Dorsolateral prefrontal cortex (tissue), 120 donors: ENCODE measurements at regions of chr11 and their contacts with region 1.

Region 1: GRCh38 chr11:111422494-111423249 is 43.6 kb upstream of the POU2AF1 start:
- DNase-seq: peak in 7 of 10 donors; percentile 37 to 74 (median 57)
- H3K4me3 ChIP-seq: no peak overlapping the region
- H3K27ac ChIP-seq: no peak overlapping the region
- H3K27me3 ChIP-seq: no peaks in the 10 kb centered on the region
- CTCF ChIP-seq: peak; percentile 23 to 84 (median 69)

Region 2: DNA sequence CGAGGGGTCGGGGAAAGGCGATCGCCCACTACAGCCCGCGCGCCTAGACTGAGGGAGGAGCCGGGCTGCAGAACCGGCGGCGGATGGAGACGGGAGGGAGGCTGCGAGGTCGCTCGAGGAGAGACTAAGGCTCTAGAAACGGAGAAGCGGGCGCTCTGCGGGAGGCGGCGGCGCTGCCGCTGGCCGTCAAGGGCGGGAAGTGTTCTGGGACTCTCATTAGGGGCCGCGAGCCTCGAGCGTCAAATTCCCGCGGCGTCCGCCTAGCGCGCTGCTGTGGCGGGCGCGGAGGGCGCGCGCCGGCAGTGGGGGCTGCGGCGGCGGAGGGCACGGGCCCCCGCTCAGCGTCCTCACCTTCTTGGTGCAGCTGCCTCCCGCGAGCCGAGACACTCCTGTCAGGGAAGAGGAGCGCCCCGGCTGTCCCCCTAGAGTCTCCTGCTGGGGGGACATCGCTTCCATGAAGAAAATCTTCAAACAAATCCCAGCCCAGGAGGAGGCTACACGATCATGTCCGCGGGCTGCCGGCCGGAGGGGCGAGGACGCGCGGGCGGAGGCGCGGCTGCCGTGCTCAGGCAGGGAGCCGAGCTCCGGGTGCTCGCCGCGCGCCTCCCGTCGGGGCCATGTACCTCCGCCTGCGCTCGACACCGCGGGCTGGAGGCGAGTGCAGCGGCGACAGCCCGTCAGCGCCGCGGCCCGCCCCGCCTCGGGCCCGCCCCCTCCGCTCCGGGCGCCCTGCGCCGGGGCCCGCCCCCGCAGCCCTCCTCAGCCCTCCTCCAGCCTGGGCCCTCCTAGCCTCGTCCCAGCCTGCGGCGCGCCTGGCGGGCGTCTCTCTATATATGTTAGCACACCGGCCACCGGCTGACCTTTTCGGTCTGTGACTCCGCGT is 710.7 kb before region 1 on chr11 and contains the start of gene ARHGAP20:
- intact Hi-C with region 1: loop called in 1 of 2 experiments (anchors 10 kb)
- DNase-seq: peak in 9 of 10 donors; percentile 35 to 81 (median 62)
- H3K4me3 ChIP-seq: peak within 1 kb of the TSS; percentile 56 to 91 (median 77)
- H3K27ac ChIP-seq: peak within 1 kb of the TSS in 58 of 59 donors; percentile 29 to 94 (median 82)
- H3K27me3 ChIP-seq: no peaks in the 10 kb centered on the region
- CTCF ChIP-seq: peak in 2 of 56 donors; percentile 5 to 11
- total RNA-seq, gene ARHGAP20: 7.1 to 28.5 (median 18.2) TPM

Region 3: GRCh38 chr11:111283945-111284481 is 138.7 kb before region 1 on chr11:
- intact Hi-C with region 1: loop called (anchors 2 to 5 kb)
- DNase-seq: no peak
- H3K4me3 ChIP-seq: no peak overlapping the region
- H3K27ac ChIP-seq: peak overlapping the region in 1 of 59 donors; percentile 10
- H3K27me3 ChIP-seq: no peaks in the 10 kb centered on the region
- CTCF ChIP-seq: no peak

Region 4: GRCh38 chr11:111635706-111636045 is 213.0 kb after region 1 on chr11:
- intact Hi-C with region 1: no loop called
- DNase-seq: peak in 9 of 10 donors; percentile 26 to 70 (median 56)
- H3K4me3 ChIP-seq: peak overlapping the region in 23 of 59 donors; percentile 2 to 36 (median 18)
- H3K27ac ChIP-seq: peak overlapping the region; percentile 29 to 95 (median 82)
- H3K27me3 ChIP-seq: no peaks in the 10 kb centered on the region
- CTCF ChIP-seq: peak in 1 of 56 donors; percentile 6